H1 (cell line): ENCODE measurements at regions of chr15 and their contacts with region 1.

Region 1: DNA sequence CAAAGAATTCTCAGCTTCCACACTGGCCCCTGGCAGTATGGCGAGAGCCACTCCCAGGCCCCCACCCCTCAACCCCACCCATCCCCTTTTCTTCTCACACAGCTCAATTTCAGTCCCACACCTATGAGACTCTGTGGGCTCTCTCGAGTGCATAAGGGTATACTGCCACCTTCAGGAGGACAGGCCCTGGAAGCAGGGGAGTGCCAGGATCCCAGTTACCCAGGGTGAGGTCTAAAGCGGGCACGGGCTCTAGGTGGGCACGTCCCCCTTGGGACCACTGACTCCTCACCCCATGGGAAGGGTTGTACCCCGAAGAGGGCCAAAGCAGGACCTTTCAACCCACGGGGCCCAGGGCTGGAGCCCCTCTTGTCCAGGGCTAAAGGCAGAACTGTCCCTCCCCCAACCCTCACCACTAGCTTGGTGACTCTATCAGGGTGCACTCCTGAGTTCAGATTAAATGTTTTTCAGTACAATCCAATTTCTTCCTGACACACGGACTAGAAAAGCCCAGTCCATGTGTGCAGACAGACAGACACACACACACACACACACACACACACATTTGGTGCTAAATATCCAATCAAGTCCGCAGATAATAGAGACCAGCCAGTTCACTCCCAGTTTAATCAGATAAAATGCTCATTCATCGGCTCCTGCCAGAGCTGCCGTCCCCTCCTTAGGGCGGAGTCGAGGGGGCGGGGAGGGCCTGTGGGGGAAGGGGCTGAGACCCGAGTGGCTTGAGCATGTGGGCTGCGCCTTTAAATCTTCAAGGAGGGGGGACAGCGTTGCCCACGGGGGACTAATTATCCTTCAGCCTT is 59.4 kb downstream of the CYP11A1 start:
- DNase-seq: peak in 1 of 2 experiments; percentile 74
- H3K4me3 ChIP-seq: peak overlapping the region in 1 of 4 experiments; percentile 37; a peak in 1 of 8 replicates
- H3K27ac ChIP-seq: no peak overlapping the region
- H3K4me1 ChIP-seq: peaks cover 0 to 36% (median 22%) of the 10 kb centered on the region in 4 experiments; a peak in 6 of 7 replicates
- H3K27me3 ChIP-seq: peaks cover 0 to 10% (median 0%) of the 10 kb centered on the region in 4 experiments; a peak in 4 of 7 replicates
- CTCF ChIP-seq: peak; percentile 74 to 87 (median 85)
- EP300 ChIP-seq: no peak
- POLR2A ChIP-seq: no peak
- RAD21 ChIP-seq: peak; percentile 87 to 89

Region 2: GRCh38 chr15:73908030-73908821 is 399.8 kb before region 1 on chr15:
- CTCF ChIA-PET with region 1: no interaction called
- POLR2A ChIA-PET with region 1: no interaction called
- DNase-seq: peak in 1 of 2 experiments; percentile 97
- H3K4me3 ChIP-seq: no peak overlapping the region
- H3K27ac ChIP-seq: no peak overlapping the region
- H3K4me1 ChIP-seq: peaks cover 0 to 5% (median 0%) of the 10 kb centered on the region in 4 experiments; a peak in 1 of 7 replicates
- H3K27me3 ChIP-seq: no peaks in the 10 kb centered on the region
- CTCF ChIP-seq: peak; percentile 96 to 98 (median 96)
- EP300 ChIP-seq: no peak
- POLR2A ChIP-seq: no peak
- RAD21 ChIP-seq: peak; percentile 94

Region 3: DNA sequence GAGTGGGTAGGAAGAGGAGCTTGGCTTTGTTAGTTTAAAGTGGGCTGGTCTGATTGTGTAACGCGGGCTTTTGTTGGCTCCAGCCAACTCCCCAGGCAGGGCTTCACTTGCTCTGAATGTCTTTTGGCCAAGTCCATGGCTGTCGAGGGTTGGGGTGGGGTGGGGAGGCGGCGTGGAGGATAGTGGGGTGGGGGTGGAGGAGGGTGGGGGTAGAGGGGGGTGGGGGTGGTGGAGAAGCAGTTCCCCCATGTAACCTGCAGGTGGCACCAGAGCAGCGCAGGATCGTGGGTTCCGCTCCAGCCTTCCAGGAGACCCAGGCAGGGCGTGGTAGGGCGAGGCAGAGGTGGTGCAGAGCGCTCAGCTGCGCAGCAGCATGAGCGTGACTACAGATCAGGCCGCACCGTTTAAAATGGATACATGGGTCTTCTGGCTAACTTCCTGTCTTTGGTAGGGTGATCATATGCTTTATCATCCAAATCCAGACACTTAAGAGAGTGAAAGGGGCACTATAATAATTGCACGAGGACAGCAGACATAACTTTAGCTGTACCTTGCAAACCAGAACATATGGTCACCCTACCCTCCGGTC is 254.0 kb before region 1 on chr15:
- CTCF ChIA-PET with region 1: interaction called, 93 read pairs
- POLR2A ChIA-PET with region 1: no interaction called
- DNase-seq: peak; percentile 21 to 86
- H3K4me3 ChIP-seq: no peak overlapping the region
- H3K27ac ChIP-seq: no peak overlapping the region
- H3K4me1 ChIP-seq: peaks cover 0 to 6% (median 0%) of the 10 kb centered on the region in 4 experiments; a peak in 2 of 7 replicates
- H3K27me3 ChIP-seq: peaks cover 0 to 6% (median 4%) of the 10 kb centered on the region in 4 experiments; a peak in 3 of 7 replicates
- CTCF ChIP-seq: peak; percentile 64 to 85 (median 77)
- EP300 ChIP-seq: no peak
- POLR2A ChIP-seq: no peak
- RAD21 ChIP-seq: peak; percentile 79 to 80

Region 4: GRCh38 chr15:74127260-74127953 is 180.6 kb before region 1 on chr15:
- CTCF ChIA-PET with region 1: interaction called, 65 read pairs
- POLR2A ChIA-PET with region 1: interaction called, 8 read pairs
- DNase-seq: peak; percentile 78 to 100
- H3K4me3 ChIP-seq: peak overlapping the region in 3 of 4 experiments; percentile 26 to 57 (median 36); a peak in 7 of 8 replicates
- H3K27ac ChIP-seq: no peak overlapping the region
- H3K4me1 ChIP-seq: peaks cover 2 to 55% (median 42%) of the 10 kb centered on the region in 4 experiments
- H3K27me3 ChIP-seq: peaks cover 49 to 64% (median 57%) of the 10 kb centered on the region in 4 experiments
- CTCF ChIP-seq: peak in 2 of 3 experiments; percentile 99; a peak in 3 of 4 replicates
- EP300 ChIP-seq: no peak
- POLR2A ChIP-seq: no peak
- RAD21 ChIP-seq: peak; percentile 96 to 99

Region 5: DNA sequence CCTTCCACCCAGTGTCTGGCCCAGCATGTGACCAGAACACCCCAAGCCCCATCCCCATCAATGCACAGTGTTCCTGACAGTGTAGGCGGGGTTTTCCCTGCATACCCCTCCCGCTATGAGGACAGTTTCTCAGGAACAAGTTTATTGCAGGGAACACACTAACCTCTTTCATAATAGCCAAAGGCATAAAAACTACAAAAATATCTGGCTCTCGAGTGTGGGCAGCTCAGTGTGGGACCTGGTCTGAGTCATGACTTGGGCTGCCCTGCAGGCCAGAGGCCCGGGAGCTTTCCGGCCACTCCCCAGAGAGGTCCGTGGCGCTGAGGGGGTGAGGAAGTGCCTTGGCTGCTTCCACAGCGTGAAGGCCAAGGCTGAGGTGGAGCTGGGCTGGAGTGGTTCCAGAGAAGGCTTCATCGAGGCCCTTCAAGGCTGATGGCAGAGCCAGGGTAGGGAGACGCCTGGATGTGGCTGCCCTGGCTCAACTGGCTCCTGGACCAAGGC is 128.6 kb before region 1 on chr15:
- CTCF ChIA-PET with region 1: interaction called, 12 read pairs
- POLR2A ChIA-PET with region 1: interaction called, 3 read pairs
- DNase-seq: no peak
- H3K4me3 ChIP-seq: no peak overlapping the region
- H3K27ac ChIP-seq: no peak overlapping the region
- H3K4me1 ChIP-seq: peaks cover 0 to 6% (median 1%) of the 10 kb centered on the region in 4 experiments; a peak in 3 of 7 replicates
- H3K27me3 ChIP-seq: no peaks in the 10 kb centered on the region; a peak in 2 of 7 replicates
- CTCF ChIP-seq: no peak
- EP300 ChIP-seq: no peak
- POLR2A ChIP-seq: no peak
- RAD21 ChIP-seq: no peak

Region 6: GRCh38 chr15:74222240-74223119 is 85.6 kb before region 1 on chr15:
- CTCF ChIA-PET with region 1: interaction called, 16 read pairs
- POLR2A ChIA-PET with region 1: interaction called, 3 read pairs
- DNase-seq: no peak
- H3K4me3 ChIP-seq: peak overlapping the region in 1 of 4 experiments; percentile 36; a peak in 1 of 8 replicates
- H3K27ac ChIP-seq: no peak overlapping the region
- H3K4me1 ChIP-seq: peaks cover 3 to 45% (median 30%) of the 10 kb centered on the region in 4 experiments
- H3K27me3 ChIP-seq: peaks cover 25 to 92% (median 86%) of the 10 kb centered on the region in 4 experiments
- CTCF ChIP-seq: no peak
- EP300 ChIP-seq: no peak
- POLR2A ChIP-seq: no peak
- RAD21 ChIP-seq: no peak

Region 7: DNA sequence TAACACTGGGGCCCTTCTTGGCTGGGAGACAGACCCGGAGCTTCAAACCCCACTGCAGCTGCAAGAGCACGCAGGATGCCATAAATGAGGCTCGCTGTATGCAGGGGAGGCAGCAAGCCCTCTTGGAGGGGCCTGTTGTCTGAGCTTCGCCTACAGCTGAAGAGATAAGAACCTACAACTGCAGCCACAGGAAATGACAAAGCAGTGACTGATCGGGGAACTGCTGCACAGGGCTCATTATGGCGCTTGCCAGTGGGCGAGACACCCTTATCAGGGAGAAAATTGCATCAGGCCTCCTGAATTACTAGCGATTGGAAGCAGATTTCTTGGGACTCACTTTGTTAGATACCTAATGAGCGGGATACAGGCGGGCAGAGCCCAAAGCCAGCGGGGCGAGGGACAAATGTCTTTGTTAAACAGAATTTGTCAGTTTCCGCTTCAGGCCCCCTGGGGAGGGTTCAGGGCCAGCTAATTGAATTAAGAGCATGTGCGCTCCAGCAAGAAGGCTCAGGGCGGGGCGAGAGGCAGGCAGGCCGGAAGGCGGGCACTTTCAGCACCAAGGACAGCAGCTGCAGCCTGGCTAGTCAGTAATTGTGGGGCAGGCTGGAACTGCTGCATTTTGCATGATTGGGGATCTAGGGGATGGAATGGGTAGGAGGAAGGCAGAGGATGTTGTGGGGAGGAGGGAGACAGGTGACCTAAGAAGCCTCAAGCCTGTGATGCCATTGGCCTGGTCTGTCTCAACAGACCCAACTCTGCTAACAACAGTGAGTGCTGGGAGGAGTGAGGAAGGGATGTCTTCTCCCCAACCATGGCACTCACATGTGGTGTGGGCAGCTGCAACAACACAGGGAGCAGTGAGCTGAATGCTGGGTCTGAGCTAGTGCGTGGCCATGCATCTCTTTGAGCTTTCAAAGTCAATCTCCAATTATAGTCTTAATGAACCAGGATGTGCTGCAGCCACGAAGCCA is 16.6 kb before region 1 on chr15:
- CTCF ChIA-PET with region 1: interaction called, 40 read pairs
- POLR2A ChIA-PET with region 1: interaction called, 5 read pairs
- DNase-seq: peak; percentile 93 to 98
- H3K4me3 ChIP-seq: peak overlapping the region in 2 of 4 experiments; percentile 2 to 44; a peak in 3 of 8 replicates
- H3K27ac ChIP-seq: no peak overlapping the region
- H3K4me1 ChIP-seq: peaks cover 3 to 12% (median 4%) of the 10 kb centered on the region in 4 experiments; a peak in 5 of 7 replicates
- H3K27me3 ChIP-seq: peaks cover 0 to 10% (median 6%) of the 10 kb centered on the region in 4 experiments; a peak in 6 of 7 replicates
- CTCF ChIP-seq: no peak
- EP300 ChIP-seq: no peak
- POLR2A ChIP-seq: no peak
- RAD21 ChIP-seq: peak in 1 of 2 experiments; percentile 30; a peak in 3 of 4 replicates

Region 8: GRCh38 chr15:74396445-74397238 is 88.6 kb after region 1 on chr15:
- CTCF ChIA-PET with region 1: no interaction called
- POLR2A ChIA-PET with region 1: no interaction called
- DNase-seq: no peak
- H3K4me3 ChIP-seq: no peak overlapping the region
- H3K27ac ChIP-seq: no peak overlapping the region
- H3K4me1 ChIP-seq: peaks cover 0 to 12% (median 7%) of the 10 kb centered on the region in 4 experiments; a peak in 4 of 7 replicates
- H3K27me3 ChIP-seq: no peaks in the 10 kb centered on the region
- CTCF ChIP-seq: no peak
- EP300 ChIP-seq: no peak
- POLR2A ChIP-seq: no peak
- RAD21 ChIP-seq: no peak